Naive thymus-derived CD4-positive, alpha-beta T cell (primary cell): ENCODE measurements at regions of chr11 and their contacts with region 1.

Region 1: GRCh38 chr11:5123802-5124521 is 14.2 kb downstream of the OR52A5 start:
- DNase-seq: peak in 8 of 9 donors; percentile 8 to 46 (median 28)
- ATAC-seq: peak; percentile 67
- H3K4me3 ChIP-seq: no peak overlapping the region
- H3K4me3 Mint-ChIP-seq: no peak overlapping the region
- H3K27ac ChIP-seq: no peak overlapping the region
- H3K27ac Mint-ChIP-seq: no peak overlapping the region
- H3K4me1 ChIP-seq: no peaks in the 10 kb centered on the region
- H3K4me1 Mint-ChIP-seq: peaks cover 0 to 2% (median 0%) of the 10 kb centered on the region in 7 donors
- H3K27me3 ChIP-seq: no peaks in the 10 kb centered on the region
- H3K27me3 Mint-ChIP-seq: peaks cover 9 to 24% (median 16%) of the 10 kb centered on the region in 5 donors

Region 2: DNA sequence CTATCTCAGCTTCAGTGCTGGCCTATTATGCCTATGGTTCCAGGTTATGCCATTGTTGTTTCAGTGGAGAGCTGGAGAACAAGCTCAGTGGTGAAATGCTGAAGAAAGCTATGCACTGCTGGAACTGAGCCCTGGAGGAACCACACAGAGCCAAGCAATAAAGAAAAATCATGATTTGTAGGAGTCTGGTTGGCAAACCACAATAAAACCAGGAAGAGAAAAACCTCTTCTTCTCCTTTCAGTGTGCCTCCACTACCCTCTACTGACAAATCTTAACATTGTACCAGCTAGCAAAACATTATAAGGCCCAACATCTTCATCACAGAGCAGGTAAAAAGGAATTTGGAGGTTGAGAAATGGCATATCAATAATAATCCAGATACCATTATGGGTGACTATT is 297.5 kb before region 1 on chr11:
- CTCF ChIA-PET with region 1: no interaction called
- POLR2A ChIA-PET with region 1: no interaction called
- intact Hi-C with region 1: no loop called
- DNase-seq: no peak
- ATAC-seq: no peak
- H3K4me3 ChIP-seq: no peak overlapping the region
- H3K4me3 Mint-ChIP-seq: no peak overlapping the region
- H3K27ac ChIP-seq: no peak overlapping the region
- H3K27ac Mint-ChIP-seq: no peak overlapping the region
- H3K4me1 ChIP-seq: no peaks in the 10 kb centered on the region
- H3K4me1 Mint-ChIP-seq: no peaks in the 10 kb centered on the region
- H3K27me3 ChIP-seq: no peaks in the 10 kb centered on the region
- H3K27me3 Mint-ChIP-seq: peaks cover 0 to 44% (median 15%) of the 10 kb centered on the region in 5 donors

Region 3: GRCh38 chr11:5291207-5291838 is 167.4 kb after region 1 on chr11:
- CTCF ChIA-PET with region 1: no interaction called
- POLR2A ChIA-PET with region 1: no interaction called
- intact Hi-C with region 1: loop called in 1 of 2 experiments (anchors 5 kb)
- DNase-seq: no peak
- ATAC-seq: no peak
- H3K4me3 ChIP-seq: no peak overlapping the region
- H3K4me3 Mint-ChIP-seq: no peak overlapping the region
- H3K27ac ChIP-seq: no peak overlapping the region
- H3K27ac Mint-ChIP-seq: no peak overlapping the region
- H3K4me1 ChIP-seq: no peaks in the 10 kb centered on the region
- H3K4me1 Mint-ChIP-seq: no peaks in the 10 kb centered on the region
- H3K27me3 ChIP-seq: no peaks in the 10 kb centered on the region
- H3K27me3 Mint-ChIP-seq: peaks cover 0 to 5% (median 0%) of the 10 kb centered on the region in 5 donors

Region 4: GRCh38 chr11:5380740-5381342 is 256.9 kb after region 1 on chr11:
- CTCF ChIA-PET with region 1: no interaction called
- POLR2A ChIA-PET with region 1: no interaction called
- intact Hi-C with region 1: loop called in 1 of 2 experiments (anchors 1 kb)
- DNase-seq: peak in 3 of 9 donors; percentile 1 to 23 (median 3)
- ATAC-seq: peak; percentile 26
- H3K4me3 ChIP-seq: no peak overlapping the region
- H3K4me3 Mint-ChIP-seq: no peak overlapping the region
- H3K27ac ChIP-seq: no peak overlapping the region
- H3K27ac Mint-ChIP-seq: no peak overlapping the region
- H3K4me1 ChIP-seq: no peaks in the 10 kb centered on the region
- H3K4me1 Mint-ChIP-seq: no peaks in the 10 kb centered on the region
- H3K27me3 ChIP-seq: no peaks in the 10 kb centered on the region
- H3K27me3 Mint-ChIP-seq: peaks cover 0 to 13% (median 4%) of the 10 kb centered on the region in 5 donors

Region 5: GRCh38 chr11:5808500-5809121 is 684.6 kb after region 1 on chr11 and contains the start of gene OR52N2:
- CTCF ChIA-PET with region 1: interaction called, 4 read pairs
- POLR2A ChIA-PET with region 1: no interaction called
- intact Hi-C with region 1: loop called (anchors 1 kb)
- DNase-seq: peak; percentile 38 to 73 (median 66)
- ATAC-seq: peak; percentile 92
- H3K4me3 ChIP-seq: peak within 1 kb of the TSS; percentile 61
- H3K4me3 Mint-ChIP-seq: peak within 1 kb of the TSS; percentile 86 to 95 (median 90)
- H3K27ac ChIP-seq: no peak within 1 kb of the TSS
- H3K27ac Mint-ChIP-seq: peak within 1 kb of the TSS in 8 of 9 donors; percentile 1 to 87 (median 20)
- H3K4me1 ChIP-seq: no peaks in the 10 kb centered on the region
- H3K4me1 Mint-ChIP-seq: peaks cover 7 to 16% (median 10%) of the 10 kb centered on the region in 7 donors
- H3K27me3 ChIP-seq: peaks cover 0 to 6% of the 10 kb centered on the region in 2 donors
- H3K27me3 Mint-ChIP-seq: peaks cover 12 to 29% (median 25%) of the 10 kb centered on the region in 5 donors
- total RNA-seq, gene OR52N2: not detected